Caco-2 (cell line): ENCODE measurements at regions of chr4 and their contacts with region 1.

Region 1: DNA sequence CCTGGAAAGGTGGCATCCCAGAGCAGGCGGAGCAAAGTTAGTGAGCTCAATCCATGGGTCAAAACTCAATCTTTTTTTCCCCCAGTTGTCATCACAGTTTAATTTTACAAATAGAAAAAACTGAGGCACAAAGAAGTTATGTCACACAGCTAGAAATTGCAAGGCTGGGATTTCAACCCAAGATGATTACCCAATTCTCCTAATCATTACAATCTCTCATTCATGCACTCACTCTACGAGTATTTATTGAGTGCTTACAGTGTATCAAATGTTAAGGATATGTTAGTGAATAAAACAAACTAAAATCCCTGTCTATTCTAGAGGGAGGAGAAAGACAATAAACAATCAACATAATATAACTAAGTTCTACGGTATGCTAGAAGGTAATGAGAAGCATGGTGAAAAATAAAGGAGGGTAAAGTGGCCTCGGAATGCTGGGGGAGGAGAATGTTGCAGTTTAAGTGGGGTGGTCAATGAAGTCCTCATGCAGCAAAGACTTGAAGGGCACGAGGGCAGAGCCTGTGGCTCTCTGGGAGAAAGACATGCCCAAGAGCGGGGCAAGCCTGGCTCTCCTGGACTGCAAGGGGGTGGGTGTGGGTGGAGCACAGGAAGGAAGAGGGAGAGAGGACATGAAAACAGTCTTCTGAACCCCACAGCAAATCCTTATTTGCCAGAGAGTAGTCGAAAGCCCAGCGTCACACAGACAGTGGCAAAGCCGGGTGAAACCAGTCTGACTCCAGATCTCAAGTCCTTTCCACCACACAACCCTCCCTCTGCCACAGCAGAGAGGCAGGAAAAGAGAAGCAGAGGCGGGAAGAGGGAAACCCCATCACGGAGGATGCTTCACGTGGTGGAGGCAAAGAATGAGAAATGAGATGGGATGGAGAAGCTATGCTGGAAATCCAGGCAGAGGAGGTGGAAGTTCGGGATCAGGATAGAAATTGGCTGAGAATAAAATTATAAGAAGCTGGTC is 48.3 kb downstream of the RAB33B start:
- DNase-seq: no peak
- H3K4me3 ChIP-seq: no peak overlapping the region
- H3K4me3 Mint-ChIP-seq: no peak overlapping the region
- H3K27ac Mint-ChIP-seq: no peak overlapping the region
- H3K4me1 ChIP-seq: no peaks in the 10 kb centered on the region
- H3K4me1 Mint-ChIP-seq: peaks cover 9% of the 10 kb centered on the region
- H3K27me3 ChIP-seq: no peaks in the 10 kb centered on the region
- H3K27me3 Mint-ChIP-seq: no peaks in the 10 kb centered on the region
- CTCF ChIP-seq: no peak

Region 2: GRCh38 chr4:139461022-139461628 is 41.1 kb before region 1 on chr4:
- CTCF ChIA-PET with region 1: no interaction called
- POLR2A ChIA-PET with region 1: no interaction called
- intact Hi-C with region 1: no loop called
- DNase-seq: no peak
- H3K4me3 ChIP-seq: no peak overlapping the region
- H3K4me3 Mint-ChIP-seq: no peak overlapping the region
- H3K27ac Mint-ChIP-seq: no peak overlapping the region
- H3K4me1 ChIP-seq: peaks cover 45% of the 10 kb centered on the region
- H3K4me1 Mint-ChIP-seq: peaks cover 38% of the 10 kb centered on the region
- H3K27me3 ChIP-seq: no peaks in the 10 kb centered on the region
- H3K27me3 Mint-ChIP-seq: no peaks in the 10 kb centered on the region
- CTCF ChIP-seq: no peak

Region 3: DNA sequence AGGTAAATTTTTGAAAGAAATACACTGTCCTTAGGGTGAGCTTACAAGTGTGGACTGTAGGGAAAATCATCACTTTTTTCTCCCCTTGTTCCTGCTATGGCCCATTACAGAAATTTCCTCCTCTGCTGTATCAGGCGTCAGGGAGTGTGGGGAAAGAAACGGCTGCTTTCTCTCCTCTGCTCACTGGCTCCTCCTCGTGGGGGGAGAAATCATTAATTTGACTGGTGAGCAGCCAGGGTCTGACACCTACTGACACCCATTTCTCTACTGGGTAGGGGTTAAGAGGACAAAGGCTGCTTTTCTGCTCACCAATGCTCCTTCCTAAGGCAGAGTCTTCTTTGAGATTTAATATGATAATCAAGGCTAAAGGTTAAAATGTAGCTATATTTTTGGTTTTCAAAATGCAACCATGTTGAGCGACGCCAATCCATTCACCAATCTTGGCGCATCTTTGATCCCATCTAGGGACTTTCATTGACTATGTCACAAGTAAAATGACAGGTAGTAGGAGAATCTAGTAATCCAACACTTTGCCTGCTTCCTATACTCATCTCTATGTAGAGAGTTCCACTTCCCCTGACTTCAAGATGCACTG is 28.7 kb after region 1 on chr4:
- CTCF ChIA-PET with region 1: no interaction called
- POLR2A ChIA-PET with region 1: no interaction called
- intact Hi-C with region 1: loop called (anchors 1 kb)
- DNase-seq: peak; percentile 49 to 71
- H3K4me3 ChIP-seq: no peak overlapping the region
- H3K4me3 Mint-ChIP-seq: no peak overlapping the region
- H3K27ac Mint-ChIP-seq: no peak overlapping the region
- H3K4me1 ChIP-seq: no peaks in the 10 kb centered on the region
- H3K4me1 Mint-ChIP-seq: no peaks in the 10 kb centered on the region
- H3K27me3 ChIP-seq: no peaks in the 10 kb centered on the region
- H3K27me3 Mint-ChIP-seq: no peaks in the 10 kb centered on the region
- CTCF ChIP-seq: peak; percentile 62 to 70